GM10248 (cell line): ENCODE measurements at regions of chr15 and their contacts with region 1.

Region 1: DNA sequence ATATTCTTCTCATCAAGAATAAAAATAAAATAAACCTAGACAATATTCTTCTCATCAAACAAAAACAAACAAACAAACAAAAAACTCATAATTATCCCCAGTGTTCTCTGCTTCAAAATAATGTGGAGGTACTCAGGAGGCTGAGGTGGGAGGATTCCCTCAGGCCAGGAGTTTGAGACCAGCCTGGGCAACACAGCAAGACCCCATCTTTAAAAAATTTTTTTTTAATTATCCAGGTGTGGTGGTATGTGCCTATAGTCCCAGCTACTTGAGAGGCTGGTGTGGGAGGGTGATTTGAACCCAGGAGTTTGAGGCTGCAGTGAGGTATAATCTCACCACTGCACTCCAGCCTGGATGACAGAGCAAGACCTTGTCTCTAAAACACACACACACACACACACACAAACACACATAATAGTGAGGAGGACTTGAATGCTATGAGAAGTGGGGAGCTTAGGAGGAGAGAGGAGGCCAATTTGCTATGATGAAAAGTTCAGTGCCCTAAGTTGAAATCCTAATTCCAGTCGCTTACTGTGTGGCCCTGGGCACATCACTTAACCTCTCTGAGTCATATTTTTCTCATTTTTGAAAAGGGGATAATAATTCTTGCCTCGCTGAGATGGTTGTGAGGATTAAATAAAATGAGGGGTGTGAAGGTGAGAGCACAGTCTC is 35.8 kb upstream of the HERC1 start:
- DNase-seq: no peak
- CTCF ChIP-seq: no peak

Region 2: GRCh38 chr15:63891079-63891767 is 21.7 kb after region 1 on chr15:
- CTCF ChIA-PET with region 1: interaction called, 10 read pairs
- POLR2A ChIA-PET with region 1: interaction called, 3 read pairs
- DNase-seq: peak; percentile 69
- CTCF ChIP-seq: peak; percentile 87